ENCODE measurements at regions of chr19 and their contacts with region 1.

Region 1: DNA sequence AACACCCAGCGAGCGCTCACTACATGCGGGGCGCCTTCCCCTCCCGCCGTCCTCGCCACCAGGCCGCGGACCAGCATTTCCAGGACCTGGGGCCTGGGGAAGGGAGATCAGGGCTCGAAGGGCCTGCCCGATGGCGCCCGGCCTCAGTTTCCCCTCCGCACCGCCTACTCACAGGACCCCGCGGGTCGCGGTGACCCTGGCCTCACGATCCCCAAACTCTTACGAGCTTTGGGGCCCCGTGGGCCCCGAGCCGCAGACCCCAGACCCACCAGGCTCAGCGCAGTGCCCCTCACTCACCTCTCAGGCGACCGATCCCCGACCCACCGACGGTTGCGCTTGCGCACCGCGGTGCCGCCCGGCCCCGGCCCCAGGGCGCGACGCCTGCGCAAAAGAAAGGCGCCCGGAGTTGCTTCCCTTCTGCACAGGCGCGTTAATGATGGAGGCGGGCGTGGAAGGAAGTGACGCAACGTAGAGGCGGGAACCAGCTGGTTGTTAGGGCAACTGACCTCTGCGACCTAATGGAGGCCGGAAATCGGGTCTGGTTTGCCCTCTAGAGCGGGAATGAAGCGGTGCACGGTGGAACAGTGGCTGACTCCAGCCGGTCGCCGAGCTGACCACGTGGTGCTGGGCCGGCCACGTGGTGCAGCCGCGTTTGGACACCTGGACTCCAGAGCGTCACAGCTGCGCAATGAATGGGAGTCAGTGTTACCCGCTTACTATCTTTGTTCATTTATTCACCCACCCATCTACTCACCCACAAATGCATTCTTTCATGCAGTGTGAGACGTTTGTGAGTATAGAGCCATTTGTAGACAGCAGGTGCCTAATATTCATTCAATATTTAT is at the start of gene SGTA:
- DNase-seq: peak; percentile 98
- ATAC-seq: peak; percentile 84
- H3K4me3 Mint-ChIP-seq: peak within 1 kb of the TSS; percentile 91
- H3K27ac Mint-ChIP-seq: peak within 1 kb of the TSS; percentile 98
- H3K4me1 Mint-ChIP-seq: peaks cover 58% of the 10 kb centered on the region
- H3K27me3 Mint-ChIP-seq: no peaks in the 10 kb centered on the region
- total RNA-seq, gene SGTA: 53.0 to 62.2 TPM

Region 2: DNA sequence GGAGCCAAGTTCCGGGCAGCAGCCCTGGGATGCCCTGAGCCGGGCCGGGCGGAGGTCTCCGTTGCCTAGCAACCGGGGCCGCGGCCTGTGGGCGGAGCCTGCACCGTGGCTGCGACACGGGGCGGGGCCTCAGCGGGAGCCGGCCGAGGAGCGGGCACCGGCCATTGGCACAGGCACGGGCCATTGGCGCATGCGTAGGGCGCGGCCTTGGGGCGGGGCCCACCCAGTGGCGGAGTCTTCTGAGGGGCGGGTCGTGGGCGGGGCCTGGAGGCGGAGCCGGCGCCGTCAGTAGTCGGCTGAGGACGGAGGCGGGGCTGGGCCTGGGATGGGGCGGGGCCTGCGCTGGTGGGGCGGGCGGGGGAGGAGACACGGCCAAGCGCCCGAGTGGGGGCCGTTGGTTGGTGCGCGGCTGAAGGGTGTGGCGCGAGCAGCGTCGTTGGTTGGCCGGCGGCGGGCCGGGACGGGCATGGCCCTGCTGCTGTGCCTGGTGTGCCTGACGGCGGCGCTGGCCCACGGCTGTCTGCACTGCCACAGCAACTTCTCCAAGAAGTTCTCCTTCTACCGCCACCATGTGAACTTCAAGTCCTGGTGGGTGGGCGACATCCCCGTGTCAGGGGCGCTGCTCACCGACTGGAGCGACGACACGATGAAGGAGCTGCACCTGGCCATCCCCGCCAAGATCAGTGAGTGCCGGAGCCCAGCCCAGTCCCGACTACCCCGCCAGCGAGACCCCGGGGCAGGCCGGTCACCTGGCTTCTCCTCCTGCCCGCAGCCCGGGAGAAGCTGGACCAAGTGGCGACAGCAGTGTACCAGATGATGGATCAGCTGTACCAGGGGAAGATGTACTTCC is 686.5 kb before region 1 on chr19 and contains the start of gene IZUMO4:
- CTCF ChIA-PET with region 1: no interaction called
- POLR2A ChIA-PET with region 1: no interaction called
- intact Hi-C with region 1: loop called in 1 of 2 experiments (anchors 1 kb)
- DNase-seq: peak; percentile 100
- ATAC-seq: peak; percentile 85
- H3K4me3 Mint-ChIP-seq: peak within 1 kb of the TSS; percentile 98
- H3K27ac Mint-ChIP-seq: peak within 1 kb of the TSS; percentile 94
- H3K4me1 Mint-ChIP-seq: peaks cover 35% of the 10 kb centered on the region
- H3K27me3 Mint-ChIP-seq: no peaks in the 10 kb centered on the region
- total RNA-seq, gene IZUMO4: 15.2 to 16.6 TPM

Region 3: DNA sequence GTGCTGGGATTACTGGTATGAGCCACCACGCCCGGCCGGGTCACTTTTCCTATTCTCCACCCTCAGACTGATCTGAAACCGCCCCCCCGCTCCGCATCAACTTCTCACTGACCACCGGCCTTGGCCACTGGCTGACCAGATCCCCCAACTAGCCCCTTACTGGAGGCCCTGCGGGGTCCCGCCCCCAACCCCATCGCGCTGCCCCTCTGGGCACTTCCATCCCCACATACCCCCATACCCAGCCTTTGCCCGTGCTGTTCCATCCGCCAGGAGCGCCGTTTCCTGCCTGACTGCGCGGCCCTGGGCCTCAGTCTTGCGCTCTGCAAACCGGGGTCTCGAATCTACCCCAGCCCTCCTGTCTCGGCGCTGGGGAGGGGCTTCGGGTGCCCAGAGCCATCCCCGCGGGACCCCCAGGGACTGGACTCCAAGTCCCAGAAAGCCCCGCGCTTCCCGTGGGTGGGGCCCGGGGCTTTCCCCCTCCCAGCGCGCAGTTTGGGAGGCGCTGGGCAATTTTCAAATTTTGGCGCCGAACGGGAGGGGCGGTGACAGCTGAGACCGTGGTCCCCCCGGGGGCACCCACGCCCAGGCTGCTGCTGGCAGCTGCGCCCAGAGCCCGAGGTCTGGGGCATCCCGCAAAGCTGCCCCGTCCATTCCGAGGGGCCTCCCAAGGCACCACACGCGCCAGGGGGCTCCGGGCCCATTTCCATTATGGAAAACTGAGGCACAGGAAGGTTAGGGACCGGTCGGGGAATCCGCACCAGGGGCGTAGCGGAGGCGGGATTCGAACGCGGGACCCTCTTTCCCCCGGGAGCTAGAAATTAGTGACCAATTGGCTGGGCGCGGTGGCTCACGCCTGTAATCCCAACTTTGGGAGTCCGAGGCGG is 321.2 kb before region 1 on chr19:
- CTCF ChIA-PET with region 1: no interaction called
- POLR2A ChIA-PET with region 1: no interaction called
- intact Hi-C with region 1: loop called in 1 of 2 experiments (anchors 1 kb)
- DNase-seq: peak; percentile 87
- ATAC-seq: peak; percentile 81
- H3K4me3 Mint-ChIP-seq: peak overlapping the region; percentile 77
- H3K27ac Mint-ChIP-seq: peak overlapping the region; percentile 74
- H3K4me1 Mint-ChIP-seq: peaks cover 7% of the 10 kb centered on the region
- H3K27me3 Mint-ChIP-seq: peaks cover 2% of the 10 kb centered on the region

Region 4: DNA sequence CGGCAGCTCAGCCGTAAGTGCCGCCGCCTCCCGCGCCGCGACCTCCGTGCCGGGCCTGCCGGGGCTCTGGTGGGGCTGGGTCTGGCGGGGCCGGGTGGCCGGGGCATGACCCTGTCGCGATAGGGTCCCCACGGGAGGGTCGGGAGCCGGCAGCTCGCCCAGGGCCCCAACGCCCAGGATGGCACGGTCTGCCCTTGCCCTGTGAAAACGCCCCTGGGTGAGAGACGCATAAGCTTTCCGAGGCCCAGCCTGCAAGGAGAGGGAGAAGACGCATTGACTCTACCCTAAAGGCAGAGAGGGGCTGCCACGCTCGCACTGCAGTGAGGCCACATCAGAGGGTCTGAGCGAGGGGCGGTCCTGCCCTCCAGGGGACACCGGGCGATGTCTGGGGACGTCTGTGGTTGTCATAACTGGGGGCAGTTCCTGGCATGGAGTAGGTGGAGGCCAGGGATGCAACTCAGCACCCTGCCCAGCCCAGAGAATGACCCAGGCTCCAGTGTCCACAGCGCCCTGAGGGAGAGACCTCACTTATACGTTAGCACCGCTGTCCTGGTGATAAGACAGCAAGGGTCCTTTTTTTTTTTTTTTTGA is 37.0 kb after region 1 on chr19:
- CTCF ChIA-PET with region 1: interaction called, 5 read pairs
- POLR2A ChIA-PET with region 1: no interaction called
- intact Hi-C with region 1: loop called (anchors 1 to 5 kb)
- DNase-seq: peak; percentile 31
- ATAC-seq: no peak
- H3K4me3 Mint-ChIP-seq: peak overlapping the region; percentile 78
- H3K27ac Mint-ChIP-seq: peak overlapping the region; percentile 31
- H3K4me1 Mint-ChIP-seq: peaks cover 12% of the 10 kb centered on the region
- H3K27me3 Mint-ChIP-seq: no peaks in the 10 kb centered on the region

Region 5: GRCh38 chr19:2912306-2912705 is 129.1 kb after region 1 on chr19:
- CTCF ChIA-PET with region 1: no interaction called
- POLR2A ChIA-PET with region 1: no interaction called
- intact Hi-C with region 1: no loop called
- DNase-seq: peak; percentile 51
- ATAC-seq: peak; percentile 88
- H3K4me3 Mint-ChIP-seq: peak overlapping the region; percentile 19
- H3K27ac Mint-ChIP-seq: peak overlapping the region; percentile 80
- H3K4me1 Mint-ChIP-seq: peaks cover 32% of the 10 kb centered on the region
- H3K27me3 Mint-ChIP-seq: no peaks in the 10 kb centered on the region

Region 6: DNA sequence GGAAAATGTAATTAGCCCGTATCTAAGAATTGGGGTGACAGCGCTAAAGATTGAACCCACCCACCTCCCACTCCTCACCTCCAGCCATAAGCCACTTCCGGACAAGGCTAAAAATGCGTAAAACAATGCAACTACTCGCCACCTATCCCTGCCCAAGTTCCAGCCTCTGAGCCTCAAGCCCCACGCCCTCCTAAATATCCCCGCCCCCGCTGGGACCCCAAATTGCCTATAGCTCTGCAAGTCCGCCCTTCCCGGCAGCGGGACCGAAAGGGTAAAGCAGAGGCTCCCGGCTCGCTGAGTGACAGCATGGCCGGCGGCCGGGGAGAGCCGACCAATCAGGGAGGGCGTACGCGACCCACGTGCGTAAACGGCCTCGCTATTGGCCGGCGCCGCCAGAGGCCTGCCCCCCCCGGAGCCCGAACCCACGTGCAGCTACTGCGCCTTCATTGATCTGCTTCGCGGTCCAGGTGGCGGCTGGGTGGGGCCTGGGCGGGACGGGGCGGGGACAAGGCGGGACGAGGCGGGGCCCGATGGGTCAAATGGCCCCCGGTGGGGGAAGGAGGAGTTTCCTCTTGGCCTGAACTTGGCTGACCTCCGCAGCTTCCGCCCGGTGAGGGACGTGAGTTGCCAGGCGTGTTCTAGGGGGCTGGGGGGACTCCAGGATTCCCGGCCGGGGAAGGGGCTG is 194.0 kb after region 1 on chr19 and contains the start of gene TLE6:
- CTCF ChIA-PET with region 1: no interaction called
- POLR2A ChIA-PET with region 1: no interaction called
- intact Hi-C with region 1: loop called in 1 of 2 experiments (anchors 1 kb)
- DNase-seq: peak; percentile 98
- ATAC-seq: peak; percentile 100
- H3K4me3 Mint-ChIP-seq: peak within 1 kb of the TSS; percentile 77
- H3K27ac Mint-ChIP-seq: peak within 1 kb of the TSS; percentile 63
- H3K4me1 Mint-ChIP-seq: peaks cover 14% of the 10 kb centered on the region
- H3K27me3 Mint-ChIP-seq: peaks cover 4% of the 10 kb centered on the region
- total RNA-seq, gene TLE6: 2.6 to 3.5 TPM

Region 7: DNA sequence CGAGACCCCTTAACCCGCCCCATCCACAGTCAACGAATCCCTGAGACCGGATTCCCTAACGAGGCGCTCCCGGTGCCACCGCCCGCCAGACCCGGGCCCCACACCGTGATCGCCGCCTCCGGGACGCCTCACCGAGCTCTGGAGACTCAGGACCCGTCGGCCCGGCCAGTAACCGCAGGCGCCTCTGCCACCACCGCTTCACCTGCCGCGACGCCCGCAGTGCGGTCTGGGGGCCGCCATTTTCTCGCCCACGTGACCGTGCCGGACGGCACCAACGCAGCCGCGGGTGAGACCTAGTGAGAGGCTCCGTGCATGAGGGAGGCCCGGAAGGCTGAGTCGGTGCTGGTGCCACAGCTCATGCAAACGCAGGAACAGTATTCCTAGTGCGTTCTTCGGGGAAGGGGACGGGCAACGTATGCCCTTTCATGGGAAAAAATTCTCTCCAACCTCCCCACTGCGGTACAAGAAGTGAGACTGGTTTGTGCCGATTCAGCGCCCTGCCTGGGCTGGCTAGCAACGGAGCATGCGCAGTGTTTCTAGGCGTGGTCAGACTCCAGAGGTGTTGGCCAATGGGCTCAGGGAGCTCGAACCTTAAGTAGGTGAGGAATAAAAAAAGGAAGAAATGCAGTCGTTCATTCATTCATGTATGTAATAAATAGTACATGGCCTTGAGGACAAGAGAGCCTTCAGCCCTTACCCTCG is 717.4 kb after region 1 on chr19 and contains the start of gene DOHH:
- CTCF ChIA-PET with region 1: interaction called, 3 read pairs
- POLR2A ChIA-PET with region 1: interaction called, 3 read pairs
- intact Hi-C with region 1: loop called in 1 of 2 experiments (anchors 2 kb)
- DNase-seq: peak; percentile 98
- ATAC-seq: peak; percentile 95
- H3K4me3 Mint-ChIP-seq: peak within 1 kb of the TSS; percentile 91
- H3K27ac Mint-ChIP-seq: peak within 1 kb of the TSS; percentile 97
- H3K4me1 Mint-ChIP-seq: peaks cover 26% of the 10 kb centered on the region
- H3K27me3 Mint-ChIP-seq: no peaks in the 10 kb centered on the region
- total RNA-seq, gene DOHH: 9.6 to 15.4 TPM

Measured in activated CD4-positive, alpha-beta T cell treated with anti-CD3 and anti-CD28 coated beads for 36 hours (primary cell).